Caco-2 (cell line): ENCODE measurements at regions of chr7 and their contacts with region 1.

Region 1: GRCh38 chr7:34133983-34134782 is 228.8 kb downstream of the BMPER start:
- DNase-seq: peak; percentile 70 to 81
- H3K4me3 ChIP-seq: no peak overlapping the region
- H3K4me3 Mint-ChIP-seq: no peak overlapping the region
- H3K27ac Mint-ChIP-seq: no peak overlapping the region
- H3K4me1 ChIP-seq: no peaks in the 10 kb centered on the region
- H3K4me1 Mint-ChIP-seq: no peaks in the 10 kb centered on the region
- H3K27me3 ChIP-seq: no peaks in the 10 kb centered on the region
- H3K27me3 Mint-ChIP-seq: no peaks in the 10 kb centered on the region
- CTCF ChIP-seq: peak; percentile 69 to 90

Region 2: GRCh38 chr7:33177876-33178275 is 956.3 kb before region 1 on chr7:
- CTCF ChIA-PET with region 1: no interaction called
- POLR2A ChIA-PET with region 1: no interaction called
- intact Hi-C with region 1: no loop called
- DNase-seq: no peak
- H3K4me3 ChIP-seq: no peak overlapping the region
- H3K4me3 Mint-ChIP-seq: no peak overlapping the region
- H3K27ac Mint-ChIP-seq: no peak overlapping the region
- H3K4me1 ChIP-seq: no peaks in the 10 kb centered on the region
- H3K4me1 Mint-ChIP-seq: no peaks in the 10 kb centered on the region
- H3K27me3 ChIP-seq: no peaks in the 10 kb centered on the region
- H3K27me3 Mint-ChIP-seq: no peaks in the 10 kb centered on the region
- CTCF ChIP-seq: no peak

Region 3: DNA sequence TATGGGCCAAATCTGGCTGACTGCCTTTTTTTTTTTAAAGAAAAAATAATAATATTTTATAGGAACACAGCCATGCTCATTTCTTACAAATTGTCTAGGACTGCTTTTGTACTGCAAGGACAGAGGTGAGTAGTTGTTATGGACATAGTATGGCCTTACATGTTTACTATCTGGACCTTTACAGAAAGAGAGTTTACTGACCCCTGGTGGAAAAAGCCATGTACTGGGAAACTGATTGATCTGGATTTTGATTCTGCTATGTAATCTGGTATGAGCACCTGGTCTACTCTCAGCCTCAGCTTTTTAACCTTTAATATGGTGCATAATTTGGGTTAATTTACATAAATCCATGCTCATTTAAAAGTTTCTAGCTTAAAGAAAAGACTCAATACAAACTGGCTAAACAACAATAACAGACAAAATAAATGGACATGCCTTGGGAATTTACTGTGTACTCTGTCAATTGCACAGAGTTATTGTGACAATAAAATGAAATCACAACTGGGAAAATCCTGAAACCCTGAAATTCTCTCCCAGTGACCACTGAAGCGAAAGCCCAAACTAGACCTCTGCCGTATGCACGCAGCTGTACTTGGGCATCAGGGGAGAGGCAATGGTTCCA is 31.9 kb after region 1 on chr7:
- CTCF ChIA-PET with region 1: no interaction called
- POLR2A ChIA-PET with region 1: no interaction called
- intact Hi-C with region 1: loop called (anchors 1 kb)
- DNase-seq: peak in 1 of 2 experiments; percentile 31
- H3K4me3 ChIP-seq: no peak overlapping the region
- H3K4me3 Mint-ChIP-seq: no peak overlapping the region
- H3K27ac Mint-ChIP-seq: no peak overlapping the region
- H3K4me1 ChIP-seq: no peaks in the 10 kb centered on the region
- H3K4me1 Mint-ChIP-seq: no peaks in the 10 kb centered on the region
- H3K27me3 ChIP-seq: no peaks in the 10 kb centered on the region; the same call in 1 of the 2 replicates
- H3K27me3 Mint-ChIP-seq: no peaks in the 10 kb centered on the region
- CTCF ChIP-seq: peak; percentile 25 to 34

Region 4: DNA sequence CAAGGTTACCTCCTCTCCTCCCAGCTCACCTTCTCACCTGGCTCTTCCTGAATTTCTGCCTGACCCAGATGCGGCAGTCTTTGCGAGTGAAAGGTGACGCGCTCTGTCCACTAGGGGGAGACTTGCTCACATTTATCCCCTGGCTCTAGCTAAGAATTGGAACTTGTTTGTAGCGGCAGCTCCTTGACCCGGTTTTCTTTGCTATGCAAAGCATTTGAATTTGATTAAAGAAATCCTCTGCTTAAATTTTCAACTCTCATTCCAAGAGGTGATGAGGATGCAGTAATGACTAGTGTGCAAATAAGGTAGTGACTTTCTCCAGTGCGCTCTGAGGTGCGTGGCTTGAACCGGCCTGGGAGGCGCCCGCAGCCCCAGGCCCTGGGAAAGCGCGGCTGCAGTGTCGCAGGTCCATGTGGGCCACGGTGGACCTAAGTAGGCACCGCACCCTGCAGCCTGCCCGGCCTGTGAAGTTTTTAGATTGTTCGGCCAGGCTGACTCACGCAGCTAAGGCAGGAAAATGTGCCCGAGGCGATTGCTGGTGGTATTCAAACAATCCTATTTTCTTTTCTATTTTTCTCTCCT is 186.9 kb after region 1 on chr7:
- CTCF ChIA-PET with region 1: interaction called, 15 read pairs
- POLR2A ChIA-PET with region 1: no interaction called
- intact Hi-C with region 1: loop called (anchors 1 kb)
- DNase-seq: peak; percentile 73 to 76
- H3K4me3 ChIP-seq: no peak overlapping the region
- H3K4me3 Mint-ChIP-seq: peak overlapping the region; percentile 17
- H3K27ac Mint-ChIP-seq: no peak overlapping the region
- H3K4me1 ChIP-seq: no peaks in the 10 kb centered on the region
- H3K4me1 Mint-ChIP-seq: no peaks in the 10 kb centered on the region
- H3K27me3 ChIP-seq: no peaks in the 10 kb centered on the region
- H3K27me3 Mint-ChIP-seq: no peaks in the 10 kb centered on the region
- CTCF ChIP-seq: peak; percentile 88

Region 5: GRCh38 chr7:34430458-34430857 is 296.3 kb after region 1 on chr7:
- CTCF ChIA-PET with region 1: no interaction called
- POLR2A ChIA-PET with region 1: no interaction called
- intact Hi-C with region 1: loop called (anchors 1 kb)
- DNase-seq: peak; percentile 40 to 48
- H3K4me3 ChIP-seq: no peak overlapping the region
- H3K4me3 Mint-ChIP-seq: no peak overlapping the region
- H3K27ac Mint-ChIP-seq: no peak overlapping the region
- H3K4me1 ChIP-seq: no peaks in the 10 kb centered on the region
- H3K4me1 Mint-ChIP-seq: no peaks in the 10 kb centered on the region
- H3K27me3 ChIP-seq: no peaks in the 10 kb centered on the region
- H3K27me3 Mint-ChIP-seq: peaks cover 5% of the 10 kb centered on the region
- CTCF ChIP-seq: peak; percentile 37 to 43

Region 6: GRCh38 chr7:34596892-34597291 is 462.7 kb after region 1 on chr7:
- CTCF ChIA-PET with region 1: interaction called, 4 read pairs
- POLR2A ChIA-PET with region 1: no interaction called
- intact Hi-C with region 1: loop called (anchors 1 kb)
- DNase-seq: peak in 1 of 2 experiments; percentile 13
- H3K4me3 ChIP-seq: no peak overlapping the region
- H3K4me3 Mint-ChIP-seq: no peak overlapping the region
- H3K27ac Mint-ChIP-seq: no peak overlapping the region
- H3K4me1 ChIP-seq: no peaks in the 10 kb centered on the region
- H3K4me1 Mint-ChIP-seq: no peaks in the 10 kb centered on the region
- H3K27me3 ChIP-seq: no peaks in the 10 kb centered on the region
- H3K27me3 Mint-ChIP-seq: peaks cover 6% of the 10 kb centered on the region
- CTCF ChIP-seq: peak in 1 of 2 experiments; percentile 19

Region 7: GRCh38 chr7:34928049-34928448 is 793.9 kb after region 1 on chr7:
- CTCF ChIA-PET with region 1: no interaction called
- POLR2A ChIA-PET with region 1: no interaction called
- intact Hi-C with region 1: loop called (anchors 5 kb)
- DNase-seq: peak; percentile 68 to 78
- H3K4me3 ChIP-seq: no peak overlapping the region
- H3K4me3 Mint-ChIP-seq: no peak overlapping the region
- H3K27ac Mint-ChIP-seq: no peak overlapping the region
- H3K4me1 ChIP-seq: no peaks in the 10 kb centered on the region
- H3K4me1 Mint-ChIP-seq: no peaks in the 10 kb centered on the region
- H3K27me3 ChIP-seq: no peaks in the 10 kb centered on the region
- H3K27me3 Mint-ChIP-seq: peaks cover 2% of the 10 kb centered on the region
- CTCF ChIP-seq: peak; percentile 70 to 71